T-cell (primary cell): ENCODE measurements at regions of chr6 and their contacts with region 1.

Region 1: GRCh38 chr6:134111062-134111677 is 58.7 kb upstream of the SLC2A12 start:
- DNase-seq: peak in 27 of 35 experiments; percentile 7 to 78 (median 25)
- ATAC-seq: peak; percentile 43 to 57 (median 49)
- H3K4me3 ChIP-seq: no peak overlapping the region
- H3K4me3 Mint-ChIP-seq: no peak overlapping the region
- H3K27ac ChIP-seq: no peak overlapping the region
- H3K27ac Mint-ChIP-seq: no peak overlapping the region
- H3K4me1 ChIP-seq: no peaks in the 10 kb centered on the region
- H3K4me1 Mint-ChIP-seq: peaks cover 0 to 9% (median 3%) of the 10 kb centered on the region in 3 donors
- H3K27me3 ChIP-seq: peaks cover 0 to 18% of the 10 kb centered on the region in 2 experiments
- H3K27me3 Mint-ChIP-seq: peaks cover 15 to 20% of the 10 kb centered on the region in 2 donors

Region 2: DNA sequence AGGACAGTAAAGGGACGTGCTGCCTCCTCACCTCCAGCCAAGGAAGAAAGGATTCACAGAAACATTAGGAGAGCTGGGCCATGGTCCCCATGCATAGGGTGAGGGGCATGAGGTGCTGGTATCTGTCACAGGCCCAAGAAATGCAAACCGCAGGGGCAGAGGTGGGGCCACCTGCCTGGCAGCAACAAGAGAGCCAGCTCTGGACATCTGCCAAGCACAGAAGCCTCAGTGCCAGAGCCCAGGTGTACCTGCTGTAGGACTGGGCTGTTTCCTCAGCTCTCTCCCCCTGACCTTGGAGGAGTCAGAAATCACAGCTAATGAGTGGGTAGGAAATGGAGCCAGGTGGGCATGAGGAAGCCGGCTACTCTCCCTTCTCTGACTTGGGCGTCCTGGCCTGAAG is 104.1 kb before region 1 on chr6:
- CTCF ChIA-PET with region 1: no interaction called
- POLR2A ChIA-PET with region 1: no interaction called
- DNase-seq: no peak
- ATAC-seq: no peak
- H3K4me3 ChIP-seq: no peak overlapping the region
- H3K4me3 Mint-ChIP-seq: no peak overlapping the region
- H3K27ac ChIP-seq: no peak overlapping the region
- H3K27ac Mint-ChIP-seq: no peak overlapping the region
- H3K4me1 ChIP-seq: no peaks in the 10 kb centered on the region
- H3K4me1 Mint-ChIP-seq: no peaks in the 10 kb centered on the region
- H3K27me3 ChIP-seq: peaks cover 0 to 4% of the 10 kb centered on the region in 2 experiments
- H3K27me3 Mint-ChIP-seq: peaks cover 9 to 13% of the 10 kb centered on the region in 2 donors

Region 3: GRCh38 chr6:134123666-134124208 is 12.6 kb after region 1 on chr6:
- CTCF ChIA-PET with region 1: interaction called, 7 to 14 read pairs
- POLR2A ChIA-PET with region 1: no interaction called
- DNase-seq: peak in 25 of 35 experiments; percentile 2 to 72 (median 32)
- ATAC-seq: peak; percentile 59 to 98 (median 88)
- H3K4me3 ChIP-seq: no peak overlapping the region
- H3K4me3 Mint-ChIP-seq: no peak overlapping the region
- H3K27ac ChIP-seq: no peak overlapping the region
- H3K27ac Mint-ChIP-seq: peak overlapping the region in 1 of 2 donors; percentile 66
- H3K4me1 ChIP-seq: no peaks in the 10 kb centered on the region
- H3K4me1 Mint-ChIP-seq: peaks cover 0 to 3% (median 3%) of the 10 kb centered on the region in 3 donors
- H3K27me3 ChIP-seq: peaks cover 0 to 4% of the 10 kb centered on the region in 2 experiments
- H3K27me3 Mint-ChIP-seq: peaks cover 0 to 3% of the 10 kb centered on the region in 2 donors

Region 4: DNA sequence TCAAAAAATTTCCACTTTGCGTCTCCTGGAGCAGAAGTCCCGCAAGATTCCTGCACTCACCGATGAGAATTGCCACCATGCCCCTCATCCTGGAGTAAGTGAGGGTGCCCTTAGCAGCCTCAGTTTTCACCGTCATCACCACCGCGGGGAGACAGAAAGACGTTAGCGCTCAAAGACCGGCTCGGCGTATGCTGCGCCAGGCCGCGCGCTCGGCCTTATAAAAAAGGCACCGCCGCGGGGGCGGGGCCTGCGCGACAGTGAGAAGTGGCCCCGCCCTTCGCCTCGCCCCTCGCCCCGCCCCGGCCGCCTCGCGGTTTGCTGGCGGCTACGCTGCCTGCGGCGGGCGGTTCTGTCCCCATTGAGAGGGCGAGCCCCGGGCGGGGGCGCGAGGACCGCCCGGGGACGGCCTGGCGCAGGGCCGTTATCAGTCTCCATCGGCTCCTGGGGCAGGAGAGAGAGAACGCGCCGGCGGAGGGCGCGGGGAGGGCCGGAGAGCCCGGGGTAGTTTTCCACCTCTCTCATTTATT is 63.6 kb after region 1 on chr6:
- CTCF ChIA-PET with region 1: no interaction called
- POLR2A ChIA-PET with region 1: no interaction called
- DNase-seq: peak; percentile 78 to 97 (median 92)
- ATAC-seq: peak; percentile 75 to 87 (median 80)
- H3K4me3 ChIP-seq: peak overlapping the region; percentile 66 to 78
- H3K4me3 Mint-ChIP-seq: peak overlapping the region; percentile 94 to 99 (median 97)
- H3K27ac ChIP-seq: peak overlapping the region; percentile 82
- H3K27ac Mint-ChIP-seq: peak overlapping the region; percentile 95 to 98
- H3K4me1 ChIP-seq: peaks cover 50 to 57% of the 10 kb centered on the region in 2 experiments
- H3K4me1 Mint-ChIP-seq: peaks cover 74 to 81% (median 75%) of the 10 kb centered on the region in 3 donors
- H3K27me3 ChIP-seq: no peaks in the 10 kb centered on the region
- H3K27me3 Mint-ChIP-seq: no peaks in the 10 kb centered on the region

Region 5: GRCh38 chr6:135233686-135234489 is 1122.7 kb after region 1 on chr6:
- CTCF ChIA-PET with region 1: interaction called in 1 of 2 experiments, 11 read pairs
- POLR2A ChIA-PET with region 1: no interaction called
- DNase-seq: no peak
- ATAC-seq: no peak
- H3K4me3 ChIP-seq: no peak overlapping the region
- H3K4me3 Mint-ChIP-seq: no peak overlapping the region
- H3K27ac ChIP-seq: no peak overlapping the region
- H3K27ac Mint-ChIP-seq: no peak overlapping the region
- H3K4me1 ChIP-seq: peaks cover 0 to 3% of the 10 kb centered on the region in 2 experiments
- H3K4me1 Mint-ChIP-seq: peaks cover 5 to 13% (median 7%) of the 10 kb centered on the region in 3 donors
- H3K27me3 ChIP-seq: no peaks in the 10 kb centered on the region
- H3K27me3 Mint-ChIP-seq: no peaks in the 10 kb centered on the region